Stomach (tissue), 19 donors: ENCODE measurements at regions of chr16 and their contacts with region 1.

Region 1: DNA sequence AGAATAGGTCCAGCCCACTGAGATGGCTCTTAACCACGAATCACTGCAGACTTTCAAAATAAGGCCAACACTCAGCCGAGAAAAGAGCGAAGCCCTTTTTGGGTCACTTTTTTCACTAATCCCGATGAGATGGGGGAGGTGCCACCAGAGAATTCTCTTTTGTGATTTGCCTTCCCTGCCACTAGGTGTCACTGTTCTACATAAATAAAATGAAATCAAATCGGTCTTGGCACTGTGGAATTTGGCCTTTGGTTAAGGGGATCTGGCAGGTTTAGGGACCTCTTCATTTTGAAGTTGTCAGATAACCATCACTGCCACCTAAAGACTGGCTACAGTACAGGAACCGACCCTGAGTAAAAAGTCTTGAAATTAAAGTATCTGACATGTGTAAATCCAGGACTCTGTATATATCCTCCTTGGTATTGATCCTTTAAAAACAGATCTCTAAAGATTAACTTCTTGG is 147.0 kb downstream of the HS3ST4 start:
- DNase-seq: peak in 1 of 2 donors; percentile 69
- H3K4me3 ChIP-seq: peak overlapping the region; percentile 6 to 22 (median 14)
- H3K27ac ChIP-seq: no peak overlapping the region
- H3K4me1 ChIP-seq: peaks cover 0 to 11% (median 7%) of the 10 kb centered on the region in 4 donors
- H3K27me3 ChIP-seq: peaks cover 0 to 4% (median 0%) of the 10 kb centered on the region in 3 donors
- CTCF ChIP-seq: peak in 5 of 7 experiments; percentile 56 to 81 (median 64)
- EP300 ChIP-seq: no peak
- POLR2A ChIP-seq: no peak

Region 2: DNA sequence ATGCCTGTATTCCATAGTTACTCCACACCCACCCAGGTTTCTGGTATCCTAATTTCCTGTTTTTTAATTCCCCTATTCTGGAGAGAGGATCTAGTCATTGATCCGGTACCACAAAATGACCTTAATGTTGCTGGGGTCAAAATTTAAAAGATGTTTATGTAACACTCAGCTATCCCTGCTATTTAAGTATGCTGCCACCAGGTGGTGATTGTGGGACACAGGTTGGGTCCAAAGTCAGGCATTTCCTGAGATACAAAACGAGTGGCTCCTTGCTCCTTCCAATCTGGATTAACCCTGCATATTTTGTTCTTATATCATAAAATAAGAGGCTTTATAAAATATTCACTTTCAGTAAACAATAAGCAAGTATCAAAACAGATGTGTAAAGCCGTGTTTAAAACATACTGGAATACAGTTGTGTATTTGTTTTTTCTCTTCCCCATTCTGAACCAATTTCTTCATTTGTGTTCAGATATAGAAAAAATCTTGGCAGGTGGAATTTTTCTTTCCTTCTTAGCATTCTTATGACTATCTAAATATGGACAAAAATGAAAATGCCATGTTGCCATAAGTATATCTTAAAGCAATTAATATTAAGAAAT is 130.7 kb before region 1 on chr16:
- intact Hi-C with region 1: no loop called
- DNase-seq: peak; percentile 22 to 42
- H3K4me3 ChIP-seq: no peak overlapping the region
- H3K27ac ChIP-seq: no peak overlapping the region
- H3K4me1 ChIP-seq: no peaks in the 10 kb centered on the region
- H3K27me3 ChIP-seq: no peaks in the 10 kb centered on the region
- CTCF ChIP-seq: peak in 2 of 7 experiments; percentile 28 to 48
- EP300 ChIP-seq: no peak
- POLR2A ChIP-seq: no peak

Region 3: GRCh38 chr16:27109666-27110523 is 1271.1 kb after region 1 on chr16:
- intact Hi-C with region 1: loop called (anchors 5 kb)
- DNase-seq: peak; percentile 75 to 92
- H3K4me3 ChIP-seq: peak overlapping the region; percentile 21 to 41 (median 38)
- H3K27ac ChIP-seq: peak overlapping the region in 2 of 5 donors; percentile 9 to 13
- H3K4me1 ChIP-seq: peaks cover 5 to 16% (median 14%) of the 10 kb centered on the region in 4 donors
- H3K27me3 ChIP-seq: peaks cover 0 to 5% (median 0%) of the 10 kb centered on the region in 3 donors
- CTCF ChIP-seq: peak in 5 of 7 experiments; percentile 37 to 98 (median 81)
- EP300 ChIP-seq: no peak
- POLR2A ChIP-seq: no peak